Activated CD4-positive, alpha-beta memory T cell treated with anti-CD3 and anti-CD28 coated beads for 36 hours (primary cell): ENCODE measurements at regions of chr10 and their contacts with region 1.

Region 1: GRCh38 chr10:70880077-70880534 is 8.3 kb downstream of the PCBD1 start:
- DNase-seq: peak; percentile 85
- H3K4me3 Mint-ChIP-seq: no peak overlapping the region
- H3K27ac Mint-ChIP-seq: peak overlapping the region; percentile 67
- H3K4me1 Mint-ChIP-seq: peaks cover 9% of the 10 kb centered on the region
- H3K27me3 Mint-ChIP-seq: no peaks in the 10 kb centered on the region

Region 2: GRCh38 chr10:70549962-70550458 is 330.1 kb before region 1 on chr10:
- CTCF ChIA-PET with region 1: interaction called, 14 read pairs
- POLR2A ChIA-PET with region 1: no interaction called
- intact Hi-C with region 1: loop called (anchors 1 kb)
- DNase-seq: peak; percentile 82
- H3K4me3 Mint-ChIP-seq: no peak overlapping the region
- H3K27ac Mint-ChIP-seq: no peak overlapping the region
- H3K4me1 Mint-ChIP-seq: no peaks in the 10 kb centered on the region
- H3K27me3 Mint-ChIP-seq: no peaks in the 10 kb centered on the region

Region 3: DNA sequence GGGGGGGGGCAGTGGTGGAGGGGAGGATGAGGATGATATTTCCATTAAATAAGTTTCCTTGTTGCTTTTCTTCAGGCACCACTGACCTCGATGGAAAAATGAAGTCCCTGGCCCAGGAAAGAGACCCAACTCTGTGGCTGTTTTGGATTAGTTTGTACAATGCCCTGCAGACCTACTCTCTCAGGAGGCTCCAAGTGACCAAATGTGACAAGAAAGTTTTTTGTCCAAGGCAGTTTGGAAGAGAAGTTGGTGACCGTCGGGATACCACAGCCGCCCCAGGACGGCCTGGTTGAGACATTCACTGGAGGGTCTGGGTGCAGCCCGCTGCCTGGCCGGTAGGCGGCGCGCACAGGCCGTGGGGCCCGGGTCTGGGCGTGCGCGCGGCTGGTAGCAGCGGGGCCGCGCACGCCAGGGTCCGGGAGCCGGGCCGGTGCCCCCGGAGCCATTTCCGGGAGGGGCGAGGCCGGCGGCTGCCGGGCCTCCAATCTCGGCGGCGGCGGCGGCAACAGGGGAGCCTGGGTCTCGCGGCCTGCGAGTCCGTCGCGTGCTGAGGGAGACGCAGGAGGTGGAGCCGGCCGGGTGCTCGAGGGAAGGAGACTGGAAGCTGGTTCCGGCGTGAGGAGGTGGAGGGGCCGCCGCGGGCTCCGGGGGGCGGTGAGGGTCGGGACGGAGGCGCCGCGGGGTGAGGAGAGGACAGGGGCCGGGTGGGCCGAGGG is 64.4 kb before region 1 on chr10 and contains the start of gene SGPL1:
- CTCF ChIA-PET with region 1: interaction called, 21 read pairs
- POLR2A ChIA-PET with region 1: no interaction called
- intact Hi-C with region 1: loop called (anchors 1 kb)
- DNase-seq: peak; percentile 90
- H3K4me3 Mint-ChIP-seq: peak within 1 kb of the TSS; percentile 86
- H3K27ac Mint-ChIP-seq: peak within 1 kb of the TSS; percentile 82
- H3K4me1 Mint-ChIP-seq: peaks cover 49% of the 10 kb centered on the region
- H3K27me3 Mint-ChIP-seq: no peaks in the 10 kb centered on the region
- total RNA-seq, gene SGPL1: 65.6 to 67.0 TPM

Region 4: GRCh38 chr10:70931168-70931815 is 51.2 kb after region 1 on chr10:
- CTCF ChIA-PET with region 1: no interaction called
- POLR2A ChIA-PET with region 1: no interaction called
- intact Hi-C with region 1: no loop called
- DNase-seq: no peak
- H3K4me3 Mint-ChIP-seq: no peak overlapping the region
- H3K27ac Mint-ChIP-seq: no peak overlapping the region
- H3K4me1 Mint-ChIP-seq: no peaks in the 10 kb centered on the region
- H3K27me3 Mint-ChIP-seq: no peaks in the 10 kb centered on the region

Region 5: DNA sequence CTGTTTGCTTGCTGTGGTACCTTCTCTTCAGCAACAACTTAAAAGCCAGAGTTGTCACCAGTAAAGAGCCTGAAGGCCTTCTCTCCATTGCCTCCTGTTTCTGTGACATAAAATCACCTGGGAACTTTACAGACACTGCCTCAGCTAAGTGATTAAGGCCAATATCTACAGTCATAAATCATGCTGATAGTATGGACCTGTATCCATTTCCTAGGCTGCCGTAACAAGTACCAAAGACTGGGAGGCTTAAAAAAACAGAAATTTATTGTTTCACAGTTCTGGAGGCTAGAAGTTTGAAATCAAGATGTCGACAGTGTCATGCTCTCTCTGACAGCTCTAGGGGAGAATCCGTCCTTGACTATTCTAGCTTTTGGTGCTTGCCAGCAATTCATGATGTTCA is 223.9 kb after region 1 on chr10:
- CTCF ChIA-PET with region 1: no interaction called
- POLR2A ChIA-PET with region 1: no interaction called
- intact Hi-C with region 1: no loop called
- DNase-seq: no peak
- H3K4me3 Mint-ChIP-seq: no peak overlapping the region
- H3K27ac Mint-ChIP-seq: no peak overlapping the region
- H3K4me1 Mint-ChIP-seq: no peaks in the 10 kb centered on the region
- H3K27me3 Mint-ChIP-seq: peaks cover 13% of the 10 kb centered on the region

Region 6: GRCh38 chr10:71561003-71561574 is 681.0 kb after region 1 on chr10:
- CTCF ChIA-PET with region 1: no interaction called
- POLR2A ChIA-PET with region 1: no interaction called
- intact Hi-C with region 1: no loop called
- DNase-seq: no peak
- H3K4me3 Mint-ChIP-seq: no peak overlapping the region
- H3K27ac Mint-ChIP-seq: no peak overlapping the region
- H3K4me1 Mint-ChIP-seq: no peaks in the 10 kb centered on the region
- H3K27me3 Mint-ChIP-seq: peaks cover 12% of the 10 kb centered on the region